Activated B cell treated with CpG ODN at 0.5 μM for 24 hours (primary cell): ENCODE measurements at regions of chr13 and their contacts with region 1.

Region 1: DNA sequence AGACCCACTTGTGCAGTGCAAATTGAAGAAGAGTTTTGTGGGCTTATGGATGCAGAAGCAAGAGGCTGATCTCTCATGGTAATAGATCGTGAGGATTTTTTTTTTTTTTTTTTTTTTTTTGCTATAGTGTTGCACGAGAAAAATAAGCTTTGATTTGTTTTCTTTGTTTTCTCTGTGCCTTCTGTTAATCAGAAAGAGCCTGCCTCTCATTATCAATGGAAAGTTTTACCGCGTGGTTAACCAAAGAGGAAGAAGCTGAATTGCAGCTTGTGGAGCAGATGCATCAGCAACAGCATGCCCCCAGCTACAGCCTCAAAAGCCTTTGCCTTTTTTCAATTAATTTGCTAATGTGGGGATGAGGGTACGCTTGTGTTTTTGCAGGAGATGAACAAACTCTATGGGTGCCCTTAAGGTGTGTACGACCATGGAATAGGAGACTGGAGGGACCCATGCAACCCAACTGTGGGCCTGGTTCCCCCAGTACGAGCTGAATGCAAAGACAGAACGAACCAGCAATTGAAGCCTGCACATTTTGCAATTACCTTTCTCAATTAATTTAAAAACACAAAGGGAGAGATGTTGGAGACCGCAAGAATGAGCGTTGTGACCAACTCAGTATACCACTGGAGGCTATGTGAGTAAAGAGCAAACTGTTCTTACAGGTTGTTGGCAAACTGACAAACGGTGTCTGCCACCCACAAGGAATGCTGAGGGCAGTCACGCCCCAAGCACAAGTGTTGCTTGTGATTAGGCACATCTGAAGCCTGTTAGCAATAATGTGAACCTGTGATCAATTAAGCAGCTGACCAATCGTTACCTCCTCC is 58.6 kb upstream of the SPRY2 start:
- DNase-seq: peak; percentile 14
- ATAC-seq: peak; percentile 64
- H3K4me3 Mint-ChIP-seq: peak overlapping the region; percentile 49
- H3K27ac Mint-ChIP-seq: peak overlapping the region; percentile 80
- H3K4me1 Mint-ChIP-seq: peaks cover 44% of the 10 kb centered on the region
- H3K27me3 Mint-ChIP-seq: no peaks in the 10 kb centered on the region
- CTCF ChIP-seq: no peak

Region 2: DNA sequence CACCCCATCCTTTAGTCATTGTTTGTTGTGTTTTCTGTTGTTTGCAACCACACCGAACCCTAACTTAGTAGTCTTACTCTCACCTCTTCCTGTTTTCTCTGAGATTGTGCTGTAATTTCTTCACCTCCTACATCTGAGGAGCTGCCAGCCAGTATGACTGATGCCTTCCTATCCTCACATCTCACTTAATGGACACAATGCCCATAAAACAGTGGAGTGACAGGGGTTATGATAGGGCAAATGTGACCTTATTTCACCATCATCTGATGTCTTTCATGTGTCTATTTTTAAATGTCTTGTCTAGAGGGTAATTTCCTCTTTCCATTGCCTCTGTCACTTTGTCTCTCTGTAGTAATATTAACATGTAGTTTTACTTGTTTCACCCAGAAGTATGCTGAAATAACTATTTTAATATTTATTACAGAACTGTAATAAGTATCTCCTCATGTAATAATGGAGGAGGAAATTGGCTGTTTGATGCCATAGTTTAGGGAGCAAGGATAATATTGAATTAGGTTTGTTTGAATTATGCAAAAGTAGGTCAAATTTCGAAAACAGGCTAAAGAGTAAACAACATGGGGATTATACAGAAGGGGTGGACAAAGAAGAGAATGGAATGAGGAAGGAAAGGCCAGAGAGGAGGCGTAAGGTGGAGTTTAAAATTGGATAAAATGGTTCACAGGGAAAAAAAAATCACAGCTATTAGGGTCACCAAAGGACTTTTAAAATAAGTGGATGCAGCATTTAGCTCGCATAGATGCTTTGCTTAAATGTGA is 44.9 kb after region 1 on chr13:
- CTCF ChIA-PET with region 1: no interaction called
- POLR2A ChIA-PET with region 1: no interaction called
- intact Hi-C with region 1: loop called (anchors 2 kb)
- DNase-seq: no peak
- ATAC-seq: peak; percentile 37
- H3K4me3 Mint-ChIP-seq: no peak overlapping the region
- H3K27ac Mint-ChIP-seq: no peak overlapping the region
- H3K4me1 Mint-ChIP-seq: peaks cover 58% of the 10 kb centered on the region
- H3K27me3 Mint-ChIP-seq: no peaks in the 10 kb centered on the region
- CTCF ChIP-seq: no peak

Region 3: GRCh38 chr13:80454245-80454644 is 54.7 kb after region 1 on chr13:
- CTCF ChIA-PET with region 1: no interaction called
- POLR2A ChIA-PET with region 1: interaction called, 4 read pairs
- intact Hi-C with region 1: loop called (anchors 1 kb)
- DNase-seq: no peak
- ATAC-seq: peak; percentile 89
- H3K4me3 Mint-ChIP-seq: peak overlapping the region; percentile 26
- H3K27ac Mint-ChIP-seq: peak overlapping the region; percentile 68
- H3K4me1 Mint-ChIP-seq: peaks cover 59% of the 10 kb centered on the region
- H3K27me3 Mint-ChIP-seq: no peaks in the 10 kb centered on the region
- CTCF ChIP-seq: no peak

Region 4: DNA sequence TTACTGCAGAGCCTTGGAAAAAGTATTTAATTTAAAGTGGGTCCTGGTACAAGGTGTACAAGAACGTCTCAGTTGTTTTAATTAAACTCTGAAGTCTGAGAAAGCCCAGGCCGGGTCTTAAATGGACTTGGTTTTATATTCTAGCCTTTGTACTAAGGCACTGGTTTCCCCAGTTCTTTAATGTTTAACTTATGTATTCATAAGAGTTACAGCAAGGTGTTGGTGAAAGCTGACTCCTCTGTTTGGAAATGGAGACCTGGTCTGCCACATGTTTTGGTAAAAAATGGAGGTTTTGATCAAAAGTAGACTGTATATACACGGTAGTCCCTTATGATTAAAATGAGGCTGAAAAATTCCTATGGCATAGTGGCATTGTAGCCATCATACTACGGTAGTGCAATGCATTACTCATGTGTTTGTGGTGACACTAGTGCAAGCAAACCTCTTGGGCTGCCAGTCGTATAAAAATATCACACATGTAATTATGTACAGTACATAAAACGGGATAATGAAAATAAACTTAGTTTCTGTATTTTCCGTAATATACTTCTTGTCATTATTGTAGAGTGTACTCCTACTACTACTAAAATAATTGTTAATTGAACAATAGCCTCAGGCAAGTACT is 824.8 kb after region 1 on chr13:
- CTCF ChIA-PET with region 1: no interaction called
- POLR2A ChIA-PET with region 1: no interaction called
- intact Hi-C with region 1: no loop called
- DNase-seq: no peak
- ATAC-seq: no peak
- H3K4me3 Mint-ChIP-seq: no peak overlapping the region
- H3K27ac Mint-ChIP-seq: no peak overlapping the region
- H3K4me1 Mint-ChIP-seq: no peaks in the 10 kb centered on the region
- H3K27me3 Mint-ChIP-seq: no peaks in the 10 kb centered on the region
- CTCF ChIP-seq: no peak